ENCODE measurements at regions of chr3 and their contacts with region 1.

Region 1: GRCh38 chr3:156151824-156152428 is 31.5 kb downstream of the KCNAB1 start:
- DNase-seq: peak; percentile 77
- H3K4me3 Mint-ChIP-seq: no peak overlapping the region
- H3K27ac Mint-ChIP-seq: no peak overlapping the region
- H3K4me1 Mint-ChIP-seq: peaks cover 3% of the 10 kb centered on the region
- H3K27me3 Mint-ChIP-seq: no peaks in the 10 kb centered on the region

Region 2: DNA sequence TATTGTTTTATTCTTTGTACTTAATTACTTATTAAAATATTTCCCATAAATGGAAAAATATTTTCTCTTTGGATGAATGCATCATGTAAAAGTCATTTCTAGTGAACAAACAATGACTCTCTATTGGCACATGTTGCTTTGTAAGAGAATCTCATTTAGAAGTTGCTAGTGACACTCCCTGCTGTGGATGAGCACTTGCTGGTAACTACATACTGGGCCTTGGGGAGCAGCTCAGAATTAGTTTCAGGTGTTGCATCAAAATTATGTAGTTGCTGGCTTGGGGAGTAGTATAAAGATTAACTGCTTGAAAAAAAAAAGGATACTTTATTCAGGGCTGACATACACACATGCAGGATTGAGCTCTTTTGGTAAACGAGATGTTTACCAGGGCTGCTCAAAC is 111.9 kb before region 1 on chr3:
- CTCF ChIA-PET with region 1: interaction called, 13 read pairs
- intact Hi-C with region 1: loop called (anchors 1 kb)
- DNase-seq: no peak
- H3K4me3 Mint-ChIP-seq: no peak overlapping the region
- H3K27ac Mint-ChIP-seq: no peak overlapping the region
- H3K4me1 Mint-ChIP-seq: no peaks in the 10 kb centered on the region
- H3K27me3 Mint-ChIP-seq: peaks cover 6% of the 10 kb centered on the region

Region 3: DNA sequence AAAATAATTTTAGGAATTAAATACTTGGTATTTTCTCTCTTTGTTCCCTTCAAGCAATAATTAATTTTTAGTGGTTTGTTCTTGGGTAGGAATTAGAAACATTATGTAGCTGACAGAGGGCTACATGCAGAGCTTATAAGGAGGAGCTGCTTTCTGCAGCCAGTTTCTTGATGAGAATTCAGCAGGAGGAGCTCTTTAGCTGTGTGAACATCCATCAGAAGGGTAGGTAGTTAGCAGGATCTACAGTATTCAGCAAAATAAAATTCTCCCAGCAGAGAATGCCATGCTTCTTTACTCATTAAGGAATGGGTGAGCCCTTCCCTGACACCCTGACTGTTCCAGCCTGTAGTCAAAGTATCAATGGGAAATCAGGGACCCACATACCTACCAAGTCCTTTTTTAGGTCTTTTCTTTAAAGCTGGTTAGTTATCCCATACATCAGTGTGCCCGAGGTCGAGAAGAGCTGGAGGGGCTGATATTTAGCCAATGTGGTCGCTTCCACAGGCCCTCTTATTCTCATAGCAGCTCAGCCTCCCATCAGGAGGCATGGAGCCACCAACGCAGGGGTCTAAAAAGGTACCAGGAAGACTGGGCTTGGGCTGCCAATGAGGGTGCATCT is 22.4 kb after region 1 on chr3:
- CTCF ChIA-PET with region 1: no interaction called
- intact Hi-C with region 1: no loop called
- DNase-seq: no peak
- H3K4me3 Mint-ChIP-seq: no peak overlapping the region
- H3K27ac Mint-ChIP-seq: no peak overlapping the region
- H3K4me1 Mint-ChIP-seq: no peaks in the 10 kb centered on the region
- H3K27me3 Mint-ChIP-seq: peaks cover 10% of the 10 kb centered on the region

Region 4: GRCh38 chr3:156449712-156450574 is 298.0 kb after region 1 on chr3:
- CTCF ChIA-PET with region 1: interaction called, 17 read pairs
- intact Hi-C with region 1: loop called (anchors 2 kb)
- DNase-seq: no peak
- H3K4me3 Mint-ChIP-seq: no peak overlapping the region
- H3K27ac Mint-ChIP-seq: no peak overlapping the region
- H3K4me1 Mint-ChIP-seq: no peaks in the 10 kb centered on the region
- H3K27me3 Mint-ChIP-seq: peaks cover 5% of the 10 kb centered on the region

Region 5: DNA sequence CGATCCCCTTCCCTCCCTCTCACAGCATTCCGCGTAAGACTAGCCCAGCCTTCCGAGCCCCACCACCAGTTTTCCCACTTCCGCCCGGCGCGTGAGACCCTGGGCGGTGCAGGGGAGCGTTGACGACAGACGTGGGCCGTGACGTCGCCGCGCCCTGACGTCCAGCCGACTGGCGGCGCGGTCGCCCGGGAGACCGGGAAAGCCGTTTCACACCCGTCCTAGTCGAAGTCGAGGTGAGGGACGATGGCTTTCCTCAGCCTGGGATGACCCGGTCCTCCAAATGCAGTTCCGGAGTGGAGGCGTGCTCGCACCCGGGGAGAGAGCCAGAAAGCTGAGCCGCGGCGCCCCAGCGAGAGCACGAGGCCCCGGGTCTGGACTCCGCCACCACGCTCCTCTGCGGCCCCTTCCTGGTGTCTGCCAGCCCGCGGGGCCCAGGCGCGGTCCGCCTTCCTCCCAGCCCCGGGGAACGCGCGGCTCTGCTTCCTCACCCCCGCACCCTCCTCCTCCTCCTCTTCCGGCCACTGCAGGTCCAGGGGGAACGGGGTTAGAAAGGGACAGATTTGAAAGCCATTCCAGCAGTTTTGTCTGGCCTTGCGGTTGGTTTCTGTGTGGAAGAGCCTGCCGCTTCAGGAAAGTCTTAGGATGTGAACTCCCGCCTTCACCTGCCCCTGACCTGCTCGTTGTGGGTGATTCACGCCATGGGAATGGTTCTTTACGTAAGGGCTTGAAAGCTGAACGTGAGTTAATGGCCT is 674.4 kb after region 1 on chr3 and contains the start of gene LEKR1:
- CTCF ChIA-PET with region 1: no interaction called
- intact Hi-C with region 1: loop called (anchors 10 kb)
- DNase-seq: peak; percentile 69
- H3K4me3 Mint-ChIP-seq: peak within 1 kb of the TSS; percentile 93
- H3K27ac Mint-ChIP-seq: peak within 1 kb of the TSS; percentile 92
- H3K4me1 Mint-ChIP-seq: peaks cover 16% of the 10 kb centered on the region
- H3K27me3 Mint-ChIP-seq: no peaks in the 10 kb centered on the region
- total RNA-seq, gene LEKR1: 0.43 to 0.77 TPM

Region 6: GRCh38 chr3:157239082-157239704 is 1087.3 kb after region 1 on chr3:
- CTCF ChIA-PET with region 1: no interaction called
- intact Hi-C with region 1: loop called (anchors 2 kb)
- DNase-seq: peak; percentile 88
- H3K4me3 Mint-ChIP-seq: no peak overlapping the region
- H3K27ac Mint-ChIP-seq: no peak overlapping the region
- H3K4me1 Mint-ChIP-seq: peaks cover 2% of the 10 kb centered on the region
- H3K27me3 Mint-ChIP-seq: no peaks in the 10 kb centered on the region